Panc1 (cell line): ENCODE measurements at regions of chr19 and their contacts with region 1.

Region 1: DNA sequence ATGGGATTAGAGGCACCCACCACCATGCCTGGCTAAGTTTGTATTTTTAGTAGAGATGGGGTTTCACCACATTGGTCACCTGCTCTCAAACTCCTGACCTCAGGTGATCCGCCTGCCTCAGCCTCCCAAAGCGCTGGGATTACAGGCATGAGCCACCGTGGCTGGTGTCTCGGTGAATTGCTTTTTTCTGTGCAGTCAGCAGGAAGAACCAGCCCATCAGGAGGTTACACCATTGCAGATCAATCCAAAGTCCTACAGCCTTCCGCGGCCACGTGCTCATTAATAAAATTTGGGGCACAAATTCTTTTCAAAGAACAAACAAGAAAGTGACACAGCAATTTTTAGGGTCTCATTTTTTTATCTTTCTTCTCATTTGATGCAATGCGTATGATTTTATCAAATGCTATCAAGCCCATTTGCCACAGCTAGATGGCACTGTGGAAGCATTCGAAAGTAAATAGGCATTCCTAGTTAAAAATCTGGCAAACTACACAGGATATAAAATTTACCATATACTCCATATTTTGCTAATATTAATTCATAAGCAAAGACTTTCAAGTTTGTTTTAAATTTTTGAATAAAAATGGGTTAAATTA is 54.4 kb upstream of the ZNF835 start:
- DNase-seq: no peak
- ATAC-seq: no peak
- H3K4me3 ChIP-seq: no peak overlapping the region
- H3K27ac ChIP-seq: no peak overlapping the region
- H3K4me1 ChIP-seq: no peaks in the 10 kb centered on the region
- H3K27me3 ChIP-seq: no peaks in the 10 kb centered on the region; the same call in 1 of the 2 replicates
- CTCF ChIP-seq: peak; percentile 67

Region 2: GRCh38 chr19:56710437-56710836 is 15.5 kb before region 1 on chr19:
- CTCF ChIA-PET with region 1: no interaction called
- POLR2A ChIA-PET with region 1: no interaction called
- in situ Hi-C with region 1: no loop called
- intact Hi-C with region 1: no loop called
- DNase-seq: no peak
- ATAC-seq: no peak
- H3K4me3 ChIP-seq: no peak overlapping the region
- H3K27ac ChIP-seq: no peak overlapping the region
- H3K4me1 ChIP-seq: no peaks in the 10 kb centered on the region
- H3K27me3 ChIP-seq: no peaks in the 10 kb centered on the region
- CTCF ChIP-seq: no peak

Region 3: GRCh38 chr19:56740501-56740900 is 14.6 kb after region 1 on chr19:
- CTCF ChIA-PET with region 1: no interaction called
- POLR2A ChIA-PET with region 1: no interaction called
- in situ Hi-C with region 1: no loop called
- intact Hi-C with region 1: no loop called
- DNase-seq: no peak
- ATAC-seq: no peak
- H3K4me3 ChIP-seq: no peak overlapping the region
- H3K27ac ChIP-seq: no peak overlapping the region
- H3K4me1 ChIP-seq: no peaks in the 10 kb centered on the region
- H3K27me3 ChIP-seq: no peaks in the 10 kb centered on the region; the same call in 1 of the 2 replicates
- CTCF ChIP-seq: no peak

Region 4: DNA sequence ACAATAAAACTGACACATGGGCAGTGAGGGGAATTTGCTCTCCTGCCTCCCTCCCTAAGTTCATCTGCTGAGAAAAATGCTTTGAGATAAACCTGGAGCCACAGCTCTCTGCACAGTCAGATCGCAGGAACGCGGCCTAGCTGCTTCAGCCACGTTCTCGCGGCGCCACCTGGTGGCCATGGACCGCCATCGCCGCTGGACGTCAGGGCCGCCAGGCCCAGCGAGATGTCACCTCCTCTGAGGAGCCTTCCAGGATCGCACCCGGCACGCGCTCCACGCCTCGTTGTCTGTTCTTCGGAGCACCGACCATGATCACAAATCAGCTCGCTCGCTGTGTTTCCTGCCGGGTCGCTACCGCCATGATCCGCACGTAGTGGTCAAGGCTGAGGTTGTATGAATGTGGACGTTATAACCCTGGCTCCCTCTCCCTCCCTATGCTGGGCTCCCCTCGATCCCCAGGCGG is 373.3 kb after region 1 on chr19:
- CTCF ChIA-PET with region 1: no interaction called
- POLR2A ChIA-PET with region 1: no interaction called
- in situ Hi-C with region 1: no loop called
- intact Hi-C with region 1: loop called (anchors 10 kb)
- DNase-seq: no peak
- ATAC-seq: peak; percentile 88
- H3K4me3 ChIP-seq: no peak overlapping the region
- H3K27ac ChIP-seq: no peak overlapping the region
- H3K4me1 ChIP-seq: peaks cover 3% of the 10 kb centered on the region; the same call in 1 of the 2 replicates
- H3K27me3 ChIP-seq: no peaks in the 10 kb centered on the region
- CTCF ChIP-seq: peak; percentile 98